Activated CD4-positive, alpha-beta T cell treated with anti-CD3 and anti-CD28 coated beads, Interleukin-2, amount 10 ng/mL, durations not matched to agents 24 days and 14 days (primary cell): ENCODE measurements at regions of chr6 and their contacts with region 1.

Region 1: GRCh38 chr6:111210194-111210728 is 123.0 kb downstream of the SLC16A10 start:
- DNase-seq: peak; percentile 81
- H3K4me3 Mint-ChIP-seq: no peak overlapping the region
- H3K27ac Mint-ChIP-seq: no peak overlapping the region
- H3K4me1 Mint-ChIP-seq: no peaks in the 10 kb centered on the region
- H3K27me3 Mint-ChIP-seq: no peaks in the 10 kb centered on the region

Region 2: GRCh38 chr6:111011360-111012142 is 198.7 kb before region 1 on chr6:
- intact Hi-C with region 1: loop called (anchors 1 kb)
- DNase-seq: peak; percentile 72
- H3K4me3 Mint-ChIP-seq: no peak overlapping the region
- H3K27ac Mint-ChIP-seq: peak overlapping the region; percentile 7
- H3K4me1 Mint-ChIP-seq: peaks cover 4% of the 10 kb centered on the region
- H3K27me3 Mint-ChIP-seq: no peaks in the 10 kb centered on the region

Region 3: DNA sequence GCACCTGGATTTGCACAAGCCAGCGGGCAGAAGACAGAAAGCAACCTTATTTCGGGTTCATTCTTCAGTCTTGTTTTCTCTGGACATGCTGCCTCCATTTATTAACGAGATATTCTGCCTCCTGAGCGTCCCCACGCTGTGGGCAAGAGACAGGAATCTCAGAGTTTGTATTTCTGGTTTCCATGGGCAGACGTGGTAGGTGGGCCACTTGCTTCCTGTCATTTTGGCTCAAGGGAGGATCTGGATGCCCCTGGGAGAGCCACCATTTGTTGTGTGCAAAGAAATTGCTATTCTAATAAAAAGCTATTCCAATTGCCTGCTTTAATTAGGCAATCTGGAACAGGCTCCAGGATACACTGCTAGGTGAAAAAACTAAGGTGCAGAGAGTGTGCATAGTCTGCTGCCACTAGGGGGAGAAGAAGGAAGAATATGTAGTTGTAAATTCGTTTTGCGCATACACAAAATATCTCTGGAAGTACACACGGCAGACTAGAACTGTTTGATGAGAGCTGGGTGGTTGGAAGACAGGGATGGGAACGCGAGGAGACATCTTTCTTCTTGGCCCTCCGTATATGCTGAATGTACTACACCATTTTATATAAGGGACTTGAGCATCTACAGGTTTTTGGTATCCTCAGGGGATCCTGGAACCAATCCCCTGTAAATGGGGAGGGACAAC is 153.0 kb before region 1 on chr6:
- intact Hi-C with region 1: loop called (anchors 1 kb)
- DNase-seq: peak; percentile 67
- H3K4me3 Mint-ChIP-seq: no peak overlapping the region
- H3K27ac Mint-ChIP-seq: no peak overlapping the region
- H3K4me1 Mint-ChIP-seq: peaks cover 2% of the 10 kb centered on the region
- H3K27me3 Mint-ChIP-seq: peaks cover 16% of the 10 kb centered on the region